CD14-positive monocyte (primary cell): ENCODE measurements at regions of chr15 and their contacts with region 1.

Region 1: DNA sequence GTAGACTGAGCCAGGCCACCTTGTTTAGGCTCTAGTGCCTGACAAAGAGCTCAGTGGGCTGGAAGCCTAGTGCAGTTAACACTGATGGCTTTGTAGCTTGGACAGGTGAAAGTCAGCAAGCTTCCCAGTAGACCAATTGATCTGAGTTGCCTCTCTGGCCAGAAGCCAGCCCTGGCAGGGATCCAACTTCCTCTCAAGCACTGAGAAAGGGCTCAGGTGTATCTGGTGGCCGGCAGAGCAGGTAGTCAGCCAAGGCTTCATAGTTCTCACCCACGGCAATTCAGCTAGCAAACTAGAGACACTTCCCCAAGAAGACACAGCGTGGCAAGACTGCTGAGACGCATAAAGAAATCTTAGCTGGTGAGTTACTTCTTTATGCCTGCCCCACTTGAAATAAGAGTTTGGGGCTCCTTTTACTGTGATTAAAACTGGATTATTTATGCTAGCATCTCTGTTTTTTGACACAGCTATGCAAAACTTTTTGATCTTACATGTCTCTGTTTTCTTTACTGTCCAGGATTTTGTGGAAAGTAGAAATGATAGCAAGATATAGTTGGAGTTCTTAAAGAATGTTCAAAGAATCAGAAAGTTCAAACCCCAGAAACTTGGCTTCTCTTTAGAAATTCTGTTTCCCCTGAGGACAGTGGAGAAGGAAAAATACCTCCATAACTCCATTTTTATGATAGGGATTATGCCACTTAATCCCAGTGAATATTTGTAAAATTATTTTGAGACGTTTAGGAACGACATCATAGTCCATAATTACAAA is 8.4 kb upstream of the CA12 start:
- DNase-seq: no peak
- H3K4me3 ChIP-seq: no peak overlapping the region
- H3K4me3 Mint-ChIP-seq: peak overlapping the region in 1 of 2 donors; percentile 18
- H3K27ac ChIP-seq: no peak overlapping the region
- H3K27ac Mint-ChIP-seq: no peak overlapping the region
- H3K4me1 ChIP-seq: no peaks in the 10 kb centered on the region
- H3K4me1 Mint-ChIP-seq: peaks cover 13% of the 10 kb centered on the region
- H3K27me3 ChIP-seq: no peaks in the 10 kb centered on the region
- H3K27me3 Mint-ChIP-seq: peaks cover 2 to 13% (median 4%) of the 10 kb centered on the region in 3 donors
- CTCF ChIP-seq: no peak

Region 2: DNA sequence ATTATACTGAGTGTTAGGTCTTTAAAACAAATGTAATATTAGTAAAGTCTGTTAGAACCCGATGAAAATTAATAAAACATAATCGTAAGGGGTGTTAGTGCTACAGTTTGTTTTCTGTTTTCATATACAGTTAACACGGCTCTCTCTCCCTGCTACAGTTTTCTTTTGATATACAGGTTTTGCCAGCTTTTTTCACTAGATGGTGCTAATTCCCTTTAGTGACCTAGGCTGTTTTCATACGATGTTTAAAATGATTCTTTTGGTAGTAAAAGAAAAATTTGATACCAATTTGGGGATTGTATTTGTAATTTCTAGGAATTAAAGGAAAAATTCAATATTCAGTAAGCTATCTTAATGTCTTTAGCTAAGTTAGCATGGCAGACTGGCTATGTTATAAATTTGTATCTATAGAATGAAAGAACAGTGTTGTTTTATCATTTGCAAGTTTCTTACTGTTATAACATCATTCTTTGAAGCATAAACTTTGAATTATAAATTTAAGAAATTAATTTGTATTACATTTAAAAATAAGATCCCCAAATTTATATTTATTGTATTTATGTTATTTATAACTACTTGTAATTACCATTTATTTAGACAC is 101.2 kb before region 1 on chr15:
- intact Hi-C with region 1: loop called in 1 of 2 experiments (anchors 10 kb)
- DNase-seq: peak; percentile 13 to 47 (median 23)
- H3K4me3 ChIP-seq: no peak overlapping the region
- H3K4me3 Mint-ChIP-seq: no peak overlapping the region
- H3K27ac ChIP-seq: no peak overlapping the region
- H3K27ac Mint-ChIP-seq: no peak overlapping the region
- H3K4me1 ChIP-seq: peaks cover 0 to 4% of the 10 kb centered on the region in 2 donors
- H3K4me1 Mint-ChIP-seq: peaks cover 20% of the 10 kb centered on the region
- H3K27me3 ChIP-seq: no peaks in the 10 kb centered on the region
- H3K27me3 Mint-ChIP-seq: peaks cover 0 to 3% (median 2%) of the 10 kb centered on the region in 3 donors
- CTCF ChIP-seq: peak; percentile 79